Heart left ventricle (tissue), 16 donors: ENCODE measurements at regions of chr12 and their contacts with region 1.

Region 1: GRCh38 chr12:62435303-62436163 is 31.1 kb upstream of the MON2 start:
- DNase-seq: peak; percentile 38 to 71 (median 47)
- ATAC-seq: peak; percentile 33 to 89 (median 84)
- H3K4me3 ChIP-seq: peak overlapping the region in 11 of 12 donors; percentile 30 to 63 (median 51)
- H3K27ac ChIP-seq: no peak overlapping the region
- H3K4me1 ChIP-seq: peaks cover 0 to 18% (median 9%) of the 10 kb centered on the region in 12 donors
- H3K27me3 ChIP-seq: peaks cover 0 to 38% (median 16%) of the 10 kb centered on the region in 9 donors
- CTCF ChIP-seq: peak in 11 of 12 donors; percentile 25 to 64 (median 40)
- POLR2A ChIP-seq: no peak

Region 2: DNA sequence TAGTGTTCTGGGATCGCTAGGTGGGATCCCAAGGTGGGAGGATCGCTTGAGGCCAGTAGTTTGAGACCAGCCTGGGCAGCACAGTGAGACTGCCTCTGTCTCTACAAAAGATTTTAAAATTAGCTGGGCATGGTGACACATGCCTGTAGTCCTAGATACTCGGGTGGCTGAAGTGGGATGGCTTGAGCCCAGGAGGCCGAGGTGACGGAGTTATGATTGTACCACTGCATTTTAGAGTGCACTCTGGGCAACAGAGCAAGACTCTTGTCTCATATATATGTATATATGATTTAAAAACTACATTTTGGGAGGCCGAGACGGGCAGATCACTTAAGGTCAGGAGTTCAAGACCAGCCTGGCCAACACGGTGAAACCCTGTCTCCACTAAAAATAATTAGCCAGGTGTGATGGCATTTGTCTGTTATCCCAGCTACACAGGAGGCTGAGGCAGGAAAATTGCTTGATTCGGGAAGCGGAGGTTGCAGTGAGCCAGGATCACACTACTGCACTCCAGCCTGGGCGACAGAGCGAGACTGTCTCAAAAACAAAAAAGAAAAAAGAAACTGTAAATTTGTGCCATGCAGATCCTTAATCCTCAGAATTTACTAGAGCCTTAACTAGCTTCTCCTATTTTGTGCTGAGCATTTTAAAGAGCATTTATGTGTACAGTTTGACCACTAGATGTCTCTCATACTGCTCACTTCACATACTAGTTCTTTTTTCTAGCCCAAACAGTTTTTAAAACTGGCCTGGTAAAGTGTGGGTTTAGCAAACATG is 145.9 kb after region 1 on chr12:
- intact Hi-C with region 1: loop called in 2 of 10 experiments (anchors 5 to 10 kb)
- DNase-seq: peak in 4 of 5 donors; percentile 10 to 56 (median 46)
- ATAC-seq: peak; percentile 81 to 94 (median 87)
- H3K4me3 ChIP-seq: no peak overlapping the region
- H3K27ac ChIP-seq: peak overlapping the region in 5 of 12 donors; percentile 4 to 55 (median 25)
- H3K4me1 ChIP-seq: peaks cover 0 to 7% (median 0%) of the 10 kb centered on the region in 12 donors
- H3K27me3 ChIP-seq: no peaks in the 10 kb centered on the region
- CTCF ChIP-seq: peak; percentile 58 to 78 (median 69)
- POLR2A ChIP-seq: no peak

Region 3: GRCh38 chr12:62813031-62813829 is 377.7 kb after region 1 on chr12:
- intact Hi-C with region 1: loop called in 3 of 10 experiments (anchors 5 kb)
- DNase-seq: peak; percentile 52 to 76 (median 61)
- ATAC-seq: peak in 3 of 4 donors; percentile 70 to 83 (median 76)
- H3K4me3 ChIP-seq: peak overlapping the region in 6 of 12 donors; percentile 3 to 40 (median 22)
- H3K27ac ChIP-seq: no peak overlapping the region
- H3K4me1 ChIP-seq: peaks cover 0 to 15% (median 6%) of the 10 kb centered on the region in 12 donors
- H3K27me3 ChIP-seq: no peaks in the 10 kb centered on the region
- CTCF ChIP-seq: peak; percentile 51 to 85 (median 72)
- POLR2A ChIP-seq: no peak